Dorsolateral prefrontal cortex (tissue), 120 donors: ENCODE measurements at regions of chr15 and their contacts with region 1.

Region 1: DNA sequence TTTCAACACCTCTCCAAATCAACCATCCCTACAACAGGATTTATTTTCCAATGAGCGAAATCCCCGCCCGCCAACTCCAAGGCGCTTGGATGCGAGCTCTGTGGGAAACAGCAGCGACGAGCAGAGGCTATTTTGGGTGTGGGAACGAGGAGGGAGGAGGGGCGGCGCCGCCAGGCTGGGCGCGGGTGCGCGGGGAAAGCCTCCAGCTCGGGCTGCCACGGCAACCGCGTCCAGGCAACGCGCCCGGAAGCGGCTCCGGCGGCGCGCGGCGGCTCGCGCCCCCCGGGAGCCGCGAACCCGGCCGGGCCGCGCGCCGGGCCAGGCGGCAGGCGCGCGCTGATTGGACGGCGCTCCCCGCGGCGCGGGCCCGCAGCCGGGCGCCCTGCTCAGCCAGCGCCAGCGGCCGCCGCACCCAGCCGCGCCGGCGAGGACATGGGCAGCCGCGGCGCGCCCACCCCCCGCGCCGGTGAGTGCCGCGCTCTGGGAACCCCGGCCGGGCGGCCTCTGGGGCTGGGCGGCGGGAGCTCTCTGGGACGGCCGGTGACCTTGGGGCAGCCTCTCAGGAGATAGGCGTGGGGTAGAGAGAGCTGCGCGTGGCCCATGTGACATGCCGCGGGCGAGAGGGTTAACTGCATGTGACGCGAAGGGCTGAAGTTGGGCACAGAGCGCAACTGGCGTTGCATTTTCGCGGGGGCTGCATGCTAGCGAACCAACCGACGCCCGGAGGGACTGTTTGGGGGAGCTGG is at the start of gene FAM81A:
- DNase-seq: peak; percentile 67 to 92 (median 88)
- H3K4me3 ChIP-seq: peak within 1 kb of the TSS; percentile 57 to 83 (median 70)
- H3K27ac ChIP-seq: peak within 1 kb of the TSS in 58 of 59 donors; percentile 17 to 91 (median 77)
- H3K27me3 ChIP-seq: no peaks in the 10 kb centered on the region
- CTCF ChIP-seq: peak in 1 of 56 donors; percentile 9
- total RNA-seq, gene FAM81A: 23.4 to 120 (median 69.9) TPM

Region 2: DNA sequence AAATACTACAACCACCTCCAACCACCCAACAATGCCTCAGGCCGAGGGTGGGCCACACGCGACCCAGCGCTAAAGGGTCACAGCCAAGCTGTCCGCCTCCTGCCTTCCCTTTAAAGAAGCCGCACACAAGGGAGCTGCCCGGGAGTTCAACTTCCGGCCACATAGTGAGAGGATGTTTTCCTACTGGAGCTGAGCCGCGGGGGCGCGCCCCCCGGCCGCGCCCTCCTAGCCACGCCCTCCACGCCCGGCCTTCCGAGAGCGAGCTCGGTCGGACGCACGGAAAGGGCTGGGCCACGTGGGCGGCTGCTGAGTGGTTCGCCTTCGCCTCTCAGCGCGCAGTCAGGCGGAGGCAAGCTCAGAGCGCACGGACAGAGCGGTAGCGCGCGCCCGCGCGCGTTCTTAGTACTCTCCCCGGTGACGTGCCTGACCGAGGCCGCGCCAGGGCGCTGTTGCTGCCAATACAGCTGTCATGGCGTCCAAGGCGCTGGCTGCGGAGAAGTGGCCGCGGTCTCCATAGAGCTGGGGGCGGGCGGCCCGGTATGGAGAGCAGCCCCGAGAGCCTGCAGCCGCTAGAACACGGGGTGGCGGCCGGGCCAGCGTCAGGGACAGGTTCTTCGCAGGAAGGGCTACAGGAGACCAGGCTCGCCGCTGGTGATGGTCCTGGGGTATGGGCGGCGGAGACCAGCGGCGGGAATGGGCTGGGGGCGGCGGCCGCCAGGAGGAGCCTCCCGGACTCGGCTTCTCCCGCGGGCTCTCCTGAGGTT is 667.0 kb before region 1 on chr15 and contains the start of gene MINDY2:
- intact Hi-C with region 1: loop called in 1 of 2 experiments (anchors 5 kb)
- DNase-seq: peak; percentile 96 to 99 (median 98)
- H3K4me3 ChIP-seq: peak within 1 kb of the TSS; percentile 67 to 99 (median 95)
- H3K27ac ChIP-seq: peak within 1 kb of the TSS; percentile 91 to 100 (median 99)
- H3K27me3 ChIP-seq: no peaks in the 10 kb centered on the region
- CTCF ChIP-seq: peak in 47 of 56 donors; percentile 4 to 68 (median 35)
- total RNA-seq, gene MINDY2: 28.6 to 56.4 (median 40.0) TPM

Region 3: DNA sequence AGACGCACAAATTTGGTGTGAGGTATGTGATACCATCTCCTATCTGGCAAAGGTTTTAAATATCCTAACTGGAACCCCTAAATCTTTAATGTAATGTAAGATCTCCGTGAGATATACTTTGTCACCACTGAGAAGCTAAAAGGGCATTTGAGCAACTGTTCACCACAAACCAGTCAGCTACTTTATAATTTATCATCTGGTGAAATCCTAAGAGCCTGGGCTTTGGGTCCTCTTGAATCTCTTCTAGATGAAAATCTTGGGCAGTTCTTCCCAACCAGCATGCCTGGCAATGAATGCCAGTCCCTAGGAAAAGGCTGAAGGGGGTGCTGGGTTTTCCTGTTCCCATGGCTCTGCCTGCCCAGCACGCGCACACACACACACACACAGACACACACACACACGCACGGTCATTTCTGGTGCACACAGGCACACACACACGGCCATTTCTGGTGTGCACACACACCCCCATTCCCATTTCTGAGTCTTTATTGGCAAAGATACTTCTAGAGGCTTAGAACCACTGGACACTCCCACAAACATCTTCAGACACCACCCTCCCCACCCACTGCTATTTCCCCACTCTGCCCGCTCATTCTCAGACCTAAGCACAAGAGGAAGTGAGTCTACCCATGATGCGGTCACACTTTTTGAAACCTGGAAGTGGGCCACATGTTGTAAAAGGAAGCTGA is 137.9 kb before region 1 on chr15:
- intact Hi-C with region 1: loop called in 1 of 2 experiments (anchors 5 kb)
- DNase-seq: peak in 4 of 10 donors; percentile 21 to 55 (median 42)
- H3K4me3 ChIP-seq: peak overlapping the region in 6 of 59 donors; percentile 1 to 36 (median 24)
- H3K27ac ChIP-seq: peak overlapping the region in 36 of 59 donors; percentile 7 to 84 (median 52)
- H3K27me3 ChIP-seq: no peaks in the 10 kb centered on the region
- CTCF ChIP-seq: no peak